Activated T-helper 1 cell treated with anti-CD3 and anti-CD28 coated beads, Interleukin-12 subunit alpha, Interleukin-12 subunit beta, Interleukin-2, Interleukin-4 antibody, amounts not matched to agents 30 ng/mL and 10 ng/mL and 1 ng/mL, durations not matched to agents 14 hours and 24 hours and 36 hours (primary cell): ENCODE measurements at regions of chr13 and their contacts with region 1.

Region 1: GRCh38 chr13:39676315-39676876 is 20.9 kb downstream of the COG6 start:
- DNase-seq: no peak
- H3K4me3 Mint-ChIP-seq: no peak overlapping the region
- H3K27ac Mint-ChIP-seq: no peak overlapping the region
- H3K4me1 Mint-ChIP-seq: no peaks in the 10 kb centered on the region
- H3K27me3 Mint-ChIP-seq: no peaks in the 10 kb centered on the region

Region 2: DNA sequence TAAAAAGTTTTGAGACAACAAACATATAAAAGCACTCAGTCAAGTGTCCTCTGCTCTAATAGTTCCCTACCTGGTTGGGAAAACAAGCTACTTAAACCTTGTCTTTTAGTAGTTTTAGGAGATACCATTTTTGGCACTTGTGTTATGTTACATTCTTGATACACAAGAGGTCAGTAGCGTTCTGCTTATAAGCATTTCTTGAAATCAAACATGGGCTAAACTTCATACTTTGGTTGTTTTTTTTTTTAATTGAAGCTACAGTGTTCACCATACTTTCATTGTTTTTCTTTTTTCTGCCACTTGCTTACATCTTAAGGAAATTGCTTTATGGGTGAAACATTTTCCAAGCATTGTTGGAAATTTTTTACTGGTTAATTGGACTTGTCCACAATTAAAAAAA is 625.2 kb before region 1 on chr13:
- intact Hi-C with region 1: loop called (anchors 1 kb)
- DNase-seq: no peak
- H3K4me3 Mint-ChIP-seq: no peak overlapping the region
- H3K27ac Mint-ChIP-seq: no peak overlapping the region
- H3K4me1 Mint-ChIP-seq: peaks cover 6% of the 10 kb centered on the region
- H3K27me3 Mint-ChIP-seq: no peaks in the 10 kb centered on the region

Region 3: GRCh38 chr13:39144941-39145533 is 531.4 kb before region 1 on chr13:
- intact Hi-C with region 1: loop called (anchors 1 kb)
- DNase-seq: peak; percentile 3
- H3K4me3 Mint-ChIP-seq: no peak overlapping the region
- H3K27ac Mint-ChIP-seq: no peak overlapping the region
- H3K4me1 Mint-ChIP-seq: peaks cover 18% of the 10 kb centered on the region
- H3K27me3 Mint-ChIP-seq: peaks cover 16% of the 10 kb centered on the region

Region 4: DNA sequence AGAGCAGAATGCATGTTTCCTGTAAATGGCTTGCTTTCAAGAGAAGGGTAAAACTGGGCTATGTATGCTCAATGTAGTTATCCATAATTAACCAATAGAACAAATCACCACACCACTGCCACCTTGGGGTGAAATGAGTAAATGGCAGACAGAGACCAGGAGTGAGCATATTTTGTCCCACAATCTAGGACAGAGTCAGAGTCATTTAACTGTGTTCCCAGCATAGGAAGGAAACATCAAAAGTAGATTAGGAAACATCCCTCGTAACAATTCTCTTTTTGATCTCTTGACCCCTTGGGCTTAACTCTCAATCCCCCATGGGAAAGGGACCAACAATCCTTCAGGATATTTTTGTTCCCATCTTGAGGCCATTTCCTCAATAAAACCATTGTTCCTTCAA is 413.4 kb before region 1 on chr13:
- intact Hi-C with region 1: loop called (anchors 10 kb)
- DNase-seq: peak; percentile 14
- H3K4me3 Mint-ChIP-seq: no peak overlapping the region
- H3K27ac Mint-ChIP-seq: no peak overlapping the region
- H3K4me1 Mint-ChIP-seq: peaks cover 9% of the 10 kb centered on the region
- H3K27me3 Mint-ChIP-seq: peaks cover 6% of the 10 kb centered on the region

Region 5: DNA sequence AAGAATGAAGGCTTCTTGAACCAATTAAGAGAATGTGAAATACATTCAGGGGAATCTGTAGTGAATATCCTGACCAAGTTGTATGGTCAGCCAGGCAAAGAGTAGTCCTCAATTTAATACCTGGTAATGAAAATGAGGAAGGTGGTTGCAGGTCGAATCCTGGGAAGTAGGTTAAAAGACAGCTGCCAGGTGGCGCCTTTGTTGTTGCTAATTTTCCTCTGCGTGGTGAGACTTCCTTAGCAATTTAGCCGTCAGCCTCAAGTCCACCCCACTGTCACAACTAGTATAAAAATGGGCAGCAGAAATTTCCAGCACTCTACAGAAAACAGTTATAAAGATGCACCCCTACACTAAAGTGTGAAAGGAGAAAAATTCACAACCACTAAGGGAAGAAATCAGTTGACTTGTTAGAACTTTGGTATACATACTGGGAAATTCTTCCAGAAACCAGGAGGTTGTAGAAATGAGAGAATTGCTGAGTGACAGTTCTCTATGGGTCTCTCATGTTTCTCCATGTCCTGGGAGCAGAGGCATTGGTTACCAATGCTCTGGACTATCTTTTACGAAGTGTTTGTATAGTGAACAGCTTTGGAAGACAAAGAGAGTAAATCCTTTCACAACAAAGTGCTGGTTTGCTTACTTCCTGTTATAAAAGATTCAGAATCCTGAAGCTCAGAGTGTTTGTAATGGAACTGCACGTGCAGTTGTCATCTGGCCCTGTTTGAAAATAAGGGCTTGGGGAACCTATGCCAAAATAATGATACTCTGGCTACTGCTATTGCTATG is 402.2 kb before region 1 on chr13:
- intact Hi-C with region 1: loop called (anchors 5 kb)
- DNase-seq: no peak
- H3K4me3 Mint-ChIP-seq: no peak overlapping the region
- H3K27ac Mint-ChIP-seq: no peak overlapping the region
- H3K4me1 Mint-ChIP-seq: no peaks in the 10 kb centered on the region
- H3K27me3 Mint-ChIP-seq: peaks cover 8% of the 10 kb centered on the region

Region 6: DNA sequence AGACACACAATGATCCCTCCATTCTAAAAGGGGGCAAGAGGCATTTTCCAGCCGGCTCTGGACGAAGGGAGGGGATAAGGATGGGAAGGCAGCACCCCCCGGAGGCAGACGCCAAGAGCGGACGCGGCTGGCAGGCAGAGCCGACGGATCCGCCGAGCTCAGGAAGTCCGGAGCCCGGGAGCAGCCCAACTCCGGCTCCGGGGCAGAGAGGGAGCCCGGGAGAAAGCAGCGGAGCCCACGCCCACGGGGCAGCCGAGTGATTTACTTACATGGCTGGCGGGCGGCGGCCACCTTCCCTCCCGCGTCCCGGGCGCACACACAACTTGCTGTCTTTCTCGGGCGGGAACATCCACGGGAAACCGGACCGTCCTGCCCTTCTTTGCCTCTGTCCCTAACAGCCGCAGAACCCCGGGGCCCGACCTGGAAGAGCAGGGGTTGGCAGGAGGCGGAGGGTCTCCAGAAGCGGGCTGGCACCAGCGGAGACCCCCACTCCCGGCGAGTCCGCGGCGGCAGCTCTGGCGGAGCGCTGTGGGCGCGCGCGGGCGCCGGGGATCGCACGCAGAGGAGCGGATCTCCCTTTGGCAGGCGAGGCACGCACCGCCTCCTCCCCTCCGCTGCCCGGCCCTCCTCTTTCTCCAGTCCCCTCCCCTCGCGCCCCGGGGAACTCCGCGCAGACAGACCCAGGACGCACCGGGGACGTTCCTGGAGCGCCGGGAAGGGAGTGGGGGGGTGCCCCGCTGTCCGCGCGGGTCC is 73.6 kb before region 1 on chr13 and contains the start of gene LHFPL6:
- intact Hi-C with region 1: loop called (anchors 5 kb)
- DNase-seq: peak; percentile 67
- H3K4me3 Mint-ChIP-seq: peak within 1 kb of the TSS; percentile 83
- H3K27ac Mint-ChIP-seq: peak within 1 kb of the TSS; percentile 72
- H3K4me1 Mint-ChIP-seq: peaks cover 16% of the 10 kb centered on the region
- H3K27me3 Mint-ChIP-seq: peaks cover 47% of the 10 kb centered on the region
- total RNA-seq, gene LHFPL6: 4.2 and 4.8 TPM in 2 replicates

Region 7: DNA sequence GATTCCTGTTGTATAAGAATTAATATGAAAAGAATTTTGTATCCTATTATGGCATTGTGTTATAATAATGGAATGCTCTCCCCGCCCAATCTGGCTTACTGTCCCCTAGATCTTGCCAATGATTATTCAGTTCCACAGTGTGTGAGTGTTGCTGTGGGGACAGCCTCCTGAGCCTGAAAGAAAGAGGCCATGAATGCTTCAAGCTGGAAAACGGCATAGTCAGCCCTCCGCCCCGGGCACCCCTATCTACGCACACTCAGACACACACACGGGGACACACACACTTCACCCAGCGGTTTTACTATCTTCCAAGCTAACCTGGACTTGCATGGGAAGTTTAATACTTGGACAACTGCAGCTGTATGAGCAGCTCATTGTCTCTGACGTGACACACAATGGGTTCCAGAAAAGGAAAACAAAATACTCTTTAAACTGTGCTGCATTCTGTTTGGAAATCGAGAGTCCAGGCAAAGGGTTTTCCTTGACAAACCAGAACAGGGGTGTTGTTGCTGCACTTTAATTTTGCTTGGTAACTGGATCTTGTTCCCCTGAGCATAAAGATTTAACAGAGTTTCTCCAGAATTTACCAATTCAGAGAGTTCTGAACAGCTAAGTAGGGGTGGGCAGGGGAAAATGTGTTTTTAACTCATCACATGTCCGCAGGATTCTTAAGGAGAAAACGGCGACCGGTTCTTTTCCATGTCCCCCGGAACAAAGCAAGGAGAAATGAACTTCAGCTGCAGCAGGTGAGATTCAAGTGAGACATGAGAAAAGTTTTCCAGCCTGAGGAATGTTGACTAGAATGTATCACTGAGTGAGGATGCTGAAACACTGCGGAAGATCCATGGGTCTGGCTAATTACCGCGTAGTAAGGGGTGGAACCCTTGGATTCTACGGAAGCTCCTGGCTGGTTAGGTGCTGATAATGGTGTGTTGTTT is 517.2 kb after region 1 on chr13:
- intact Hi-C with region 1: no loop called
- DNase-seq: no peak
- H3K4me3 Mint-ChIP-seq: no peak overlapping the region
- H3K27ac Mint-ChIP-seq: no peak overlapping the region
- H3K4me1 Mint-ChIP-seq: peaks cover 40% of the 10 kb centered on the region
- H3K27me3 Mint-ChIP-seq: no peaks in the 10 kb centered on the region